Activated CD8-positive, alpha-beta memory T cell treated with anti-CD3 and anti-CD28 coated beads, Interleukin-2, amount 10 ng/mL, durations not matched to agents 7 days and 5 days (primary cell): ENCODE measurements at regions of chr15 and their contacts with region 1.

Region 1: DNA sequence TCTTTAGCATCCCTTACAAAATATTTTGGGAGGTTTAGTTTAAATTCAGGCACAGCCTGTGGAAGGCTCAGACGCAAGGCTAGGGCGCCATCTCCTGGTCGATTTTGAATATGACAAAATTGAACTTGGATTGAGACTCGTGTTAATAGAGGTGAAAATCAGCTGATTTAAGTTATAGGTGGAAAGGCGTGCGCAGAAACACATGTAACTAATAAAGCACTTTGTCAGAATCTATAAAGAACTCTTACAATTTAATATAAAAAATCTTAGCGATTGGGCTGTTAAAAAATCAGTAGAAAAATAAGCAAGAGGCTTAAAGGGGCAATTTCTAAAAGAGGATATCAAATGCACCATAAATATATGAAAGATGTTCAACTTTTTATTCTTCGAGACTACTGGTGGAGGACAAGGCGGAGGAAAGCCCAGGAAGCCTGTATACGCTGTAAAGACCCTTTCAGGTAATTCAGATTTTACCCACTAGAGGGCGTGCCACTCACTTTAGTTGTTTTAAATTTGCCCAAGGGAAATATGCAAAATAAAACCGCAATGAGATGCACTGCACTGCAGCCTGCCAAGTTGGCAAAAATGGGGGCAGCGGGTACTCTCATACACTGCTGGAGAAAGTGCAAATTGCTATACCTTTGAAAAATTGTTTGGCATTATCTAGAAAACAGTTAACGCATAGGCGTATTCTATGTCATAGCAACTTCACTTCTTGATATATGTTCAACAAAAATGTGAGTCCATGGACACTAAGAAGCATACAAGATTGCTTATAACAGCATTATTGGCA is 64.7 kb downstream of the SLC30A4 start:
- DNase-seq: peak; percentile 87
- ATAC-seq: peak; percentile 50
- H3K4me3 Mint-ChIP-seq: peak overlapping the region; percentile 79
- H3K27ac Mint-ChIP-seq: peak overlapping the region; percentile 88
- H3K4me1 Mint-ChIP-seq: peaks cover 53% of the 10 kb centered on the region
- H3K27me3 Mint-ChIP-seq: no peaks in the 10 kb centered on the region

Region 2: GRCh38 chr15:45166834-45167630 is 290.8 kb before region 1 on chr15:
- CTCF ChIA-PET with region 1: interaction called, 10 read pairs
- DNase-seq: peak; percentile 92
- ATAC-seq: peak; percentile 95
- H3K4me3 Mint-ChIP-seq: peak overlapping the region; percentile 61
- H3K27ac Mint-ChIP-seq: peak overlapping the region; percentile 79
- H3K4me1 Mint-ChIP-seq: peaks cover 14% of the 10 kb centered on the region
- H3K27me3 Mint-ChIP-seq: no peaks in the 10 kb centered on the region

Region 3: DNA sequence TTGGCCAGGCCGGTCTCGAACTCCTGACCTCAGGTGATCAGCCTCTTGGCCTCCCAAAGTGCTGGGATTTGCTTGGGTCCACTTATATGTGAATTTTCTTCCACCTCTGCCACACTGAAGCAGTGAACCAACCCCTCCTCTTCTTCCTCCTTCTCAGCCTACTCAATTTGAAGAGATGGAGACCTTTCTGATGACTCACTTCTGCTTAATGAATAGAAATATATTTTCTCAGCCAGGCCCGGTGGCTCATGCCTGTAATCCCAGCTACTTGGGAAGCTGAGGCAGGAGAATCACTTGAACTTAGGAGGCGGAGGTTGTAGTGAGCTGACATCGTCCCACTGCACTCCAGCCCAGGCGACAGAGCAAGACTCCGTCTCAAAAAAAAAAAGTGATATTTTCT is 32.7 kb before region 1 on chr15:
- CTCF ChIA-PET with region 1: interaction called, 12 read pairs
- DNase-seq: no peak
- ATAC-seq: no peak
- H3K4me3 Mint-ChIP-seq: no peak overlapping the region
- H3K27ac Mint-ChIP-seq: no peak overlapping the region
- H3K4me1 Mint-ChIP-seq: no peaks in the 10 kb centered on the region
- H3K27me3 Mint-ChIP-seq: peaks cover 4% of the 10 kb centered on the region

Region 4: GRCh38 chr15:45442500-45443135 is 15.2 kb before region 1 on chr15:
- CTCF ChIA-PET with region 1: interaction called, 35 read pairs
- DNase-seq: no peak
- ATAC-seq: no peak
- H3K4me3 Mint-ChIP-seq: no peak overlapping the region
- H3K27ac Mint-ChIP-seq: no peak overlapping the region
- H3K4me1 Mint-ChIP-seq: no peaks in the 10 kb centered on the region
- H3K27me3 Mint-ChIP-seq: no peaks in the 10 kb centered on the region

Region 5: DNA sequence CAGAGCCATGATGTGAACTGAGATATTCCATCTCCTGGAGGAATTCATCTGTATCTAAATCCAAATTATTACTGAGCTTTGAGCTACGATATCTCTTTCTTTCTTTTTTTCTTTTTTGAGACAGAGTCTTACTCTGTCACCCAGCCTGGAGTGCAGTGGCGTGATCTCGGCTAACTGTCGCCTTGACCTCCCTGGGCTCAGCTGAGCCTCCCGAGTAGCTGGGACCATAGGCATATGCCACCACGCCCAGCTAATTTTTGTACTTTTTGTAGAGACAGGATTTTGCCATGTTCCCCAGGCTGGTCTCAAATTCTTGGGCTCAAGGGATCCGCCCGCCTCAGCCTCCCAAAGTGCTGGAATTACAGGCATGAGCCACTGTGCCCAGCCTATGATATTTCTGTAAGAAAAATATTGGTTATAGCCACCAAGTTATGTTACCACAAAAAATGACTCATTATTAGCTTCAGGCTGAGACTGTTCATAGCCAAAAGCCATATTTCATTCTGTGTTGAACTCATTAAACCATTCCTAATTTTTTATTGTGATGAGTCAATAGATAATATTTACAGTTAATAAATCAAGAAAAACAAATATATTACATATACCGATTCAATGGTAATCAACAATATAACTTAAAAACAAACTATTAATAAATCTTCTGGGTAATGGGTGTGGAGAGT is 91.8 kb after region 1 on chr15:
- CTCF ChIA-PET with region 1: no interaction called
- DNase-seq: no peak
- ATAC-seq: no peak
- H3K4me3 Mint-ChIP-seq: no peak overlapping the region
- H3K27ac Mint-ChIP-seq: no peak overlapping the region
- H3K4me1 Mint-ChIP-seq: no peaks in the 10 kb centered on the region
- H3K27me3 Mint-ChIP-seq: peaks cover 32% of the 10 kb centered on the region

Region 6: GRCh38 chr15:45587095-45587860 is 129.4 kb after region 1 on chr15 and contains the start of gene BLOC1S6:
- CTCF ChIA-PET with region 1: interaction called, 45 read pairs
- DNase-seq: peak; percentile 93
- ATAC-seq: peak; percentile 87
- H3K4me3 Mint-ChIP-seq: peak within 1 kb of the TSS; percentile 98
- H3K27ac Mint-ChIP-seq: peak within 1 kb of the TSS; percentile 100
- H3K4me1 Mint-ChIP-seq: peaks cover 33% of the 10 kb centered on the region
- H3K27me3 Mint-ChIP-seq: peaks cover 4% of the 10 kb centered on the region
- total RNA-seq, gene BLOC1S6: 33.6 to 35.7 TPM

Region 7: DNA sequence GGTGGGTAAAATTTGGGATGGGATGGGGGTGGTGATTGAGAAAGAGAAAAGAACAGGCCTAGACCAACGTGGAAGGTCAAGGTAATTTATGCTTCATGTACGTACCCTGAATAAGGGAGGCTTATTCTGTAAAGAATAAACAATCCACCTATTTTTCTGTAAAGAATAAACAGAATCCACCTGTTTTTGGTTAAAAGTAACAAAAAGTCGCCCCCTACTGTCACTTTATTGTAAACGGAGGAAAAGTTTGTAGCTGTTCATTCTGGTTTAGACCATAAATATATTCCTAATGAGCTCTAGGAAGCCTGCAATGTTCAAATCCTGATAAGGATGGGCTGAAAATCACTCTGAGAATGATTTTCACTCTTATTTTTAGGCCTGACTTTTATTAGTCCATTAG is 153.5 kb after region 1 on chr15:
- CTCF ChIA-PET with region 1: interaction called, 113 read pairs
- DNase-seq: no peak
- ATAC-seq: no peak
- H3K4me3 Mint-ChIP-seq: no peak overlapping the region
- H3K27ac Mint-ChIP-seq: no peak overlapping the region
- H3K4me1 Mint-ChIP-seq: peaks cover 15% of the 10 kb centered on the region
- H3K27me3 Mint-ChIP-seq: no peaks in the 10 kb centered on the region

Region 8: DNA sequence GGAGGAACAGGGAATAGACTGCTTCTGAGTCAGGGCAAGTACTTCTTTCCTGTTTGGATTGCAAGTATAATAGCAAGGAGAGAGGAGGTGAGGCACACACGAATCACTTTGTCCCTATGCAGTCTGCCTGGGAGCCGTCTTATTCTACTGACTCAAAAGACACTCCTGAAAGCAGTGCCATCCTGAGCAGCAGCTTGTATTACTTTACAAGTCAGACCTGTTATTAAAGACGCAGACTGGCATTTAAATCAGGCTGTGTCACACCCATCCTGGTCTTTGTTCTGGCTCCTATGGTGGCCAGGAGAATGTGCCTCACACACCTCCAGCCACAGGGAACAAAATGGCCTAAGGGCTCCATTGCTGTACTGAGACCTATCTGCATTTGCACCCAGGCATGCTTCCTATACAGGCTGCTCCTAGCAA is 159.1 kb after region 1 on chr15:
- CTCF ChIA-PET with region 1: interaction called, 113 read pairs
- DNase-seq: no peak
- ATAC-seq: peak; percentile 23
- H3K4me3 Mint-ChIP-seq: no peak overlapping the region
- H3K27ac Mint-ChIP-seq: no peak overlapping the region
- H3K4me1 Mint-ChIP-seq: peaks cover 11% of the 10 kb centered on the region
- H3K27me3 Mint-ChIP-seq: no peaks in the 10 kb centered on the region

Region 9: DNA sequence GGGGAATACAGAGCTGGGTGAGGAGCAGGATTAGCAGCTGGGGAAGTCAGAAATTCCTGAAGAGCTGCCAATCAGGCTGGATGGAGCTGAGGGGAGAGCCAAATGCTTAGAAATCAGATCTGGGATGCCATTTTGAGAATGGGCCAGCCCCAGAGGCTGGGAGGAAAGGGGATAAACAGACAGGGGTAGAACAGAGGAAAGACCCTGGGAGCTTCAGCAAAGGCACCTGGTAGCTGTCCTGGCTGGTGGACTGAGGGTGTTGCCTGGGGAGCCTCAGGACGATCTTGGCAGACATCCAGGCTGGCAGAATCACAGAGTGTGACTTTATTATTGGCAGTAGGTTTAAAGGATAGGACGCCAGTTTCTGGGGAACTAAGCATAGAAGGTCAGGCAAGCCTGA is 274.8 kb after region 1 on chr15:
- CTCF ChIA-PET with region 1: no interaction called
- DNase-seq: no peak
- ATAC-seq: no peak
- H3K4me3 Mint-ChIP-seq: no peak overlapping the region
- H3K27ac Mint-ChIP-seq: no peak overlapping the region
- H3K4me1 Mint-ChIP-seq: no peaks in the 10 kb centered on the region
- H3K27me3 Mint-ChIP-seq: peaks cover 35% of the 10 kb centered on the region